GM10248 (cell line): ENCODE measurements at regions of chr6 and their contacts with region 1.

Region 1: GRCh38 chr6:32984605-32985389 is 16.4 kb downstream of the BRD2 start:
- DNase-seq: peak; percentile 75
- CTCF ChIP-seq: peak; percentile 80

Region 2: DNA sequence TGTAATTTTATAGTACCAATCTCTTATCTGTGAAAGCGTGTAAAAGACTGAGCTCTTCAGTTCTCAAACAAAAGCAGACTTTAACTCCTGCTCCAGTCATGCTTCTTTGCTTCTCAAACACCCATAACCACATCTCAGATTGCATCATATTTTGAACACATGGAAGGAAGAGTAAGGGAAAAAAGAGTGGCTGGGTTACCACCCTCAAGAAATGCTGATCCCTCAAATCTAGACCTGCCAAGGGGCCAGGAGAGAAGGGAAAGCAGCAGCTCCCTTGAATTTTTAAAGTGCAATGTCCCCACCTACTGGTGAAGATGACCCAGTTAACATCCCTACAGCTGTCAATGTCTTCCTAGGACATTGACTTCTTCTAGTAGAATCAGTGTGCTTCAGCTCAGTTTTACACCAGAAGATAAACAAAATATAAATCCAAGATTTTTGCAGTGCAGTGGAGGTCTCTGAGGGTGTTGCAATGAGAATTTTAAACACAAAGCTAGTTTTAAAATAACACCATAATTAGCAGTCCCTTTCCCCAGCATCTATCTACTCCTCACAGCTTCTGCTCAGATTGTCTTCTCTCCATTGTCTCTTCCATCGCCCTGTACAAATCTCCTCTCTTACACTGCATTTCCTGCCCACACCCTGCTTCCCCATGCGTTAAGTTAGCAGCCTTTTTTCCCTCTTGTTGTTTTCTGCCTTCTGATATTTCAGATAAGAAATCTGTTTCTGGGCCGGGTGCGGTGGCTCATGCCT is 198.8 kb before region 1 on chr6:
- CTCF ChIA-PET with region 1: no interaction called
- POLR2A ChIA-PET with region 1: no interaction called
- DNase-seq: peak; percentile 53
- CTCF ChIP-seq: peak; percentile 66

Region 3: GRCh38 chr6:32825966-32826365 is 158.8 kb before region 1 on chr6:
- CTCF ChIA-PET with region 1: interaction called, 15 read pairs
- POLR2A ChIA-PET with region 1: no interaction called
- DNase-seq: no peak
- CTCF ChIP-seq: peak; percentile 36

Region 4: DNA sequence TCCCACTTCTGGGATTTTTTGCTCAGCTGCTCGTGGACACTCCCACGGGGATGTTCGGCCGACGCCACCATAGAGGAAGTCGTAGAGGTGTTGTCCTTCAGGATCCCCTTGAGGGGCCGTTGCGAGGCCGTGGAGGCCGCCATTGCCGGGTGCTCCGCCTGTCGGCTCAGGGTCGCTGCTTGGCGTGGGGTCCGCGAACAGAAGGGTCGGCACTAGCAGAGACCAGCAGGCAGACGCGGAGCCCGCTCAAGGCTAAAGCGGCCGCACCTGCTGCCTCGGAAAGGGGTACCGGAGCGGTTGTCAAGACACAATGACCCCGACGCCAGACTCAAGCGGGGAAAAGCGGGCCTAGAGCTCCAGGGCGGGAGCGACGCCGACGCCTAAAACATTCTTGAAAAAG is 105.1 kb before region 1 on chr6:
- CTCF ChIA-PET with region 1: interaction called, 111 read pairs
- POLR2A ChIA-PET with region 1: no interaction called
- DNase-seq: no peak
- CTCF ChIP-seq: no peak

Region 5: DNA sequence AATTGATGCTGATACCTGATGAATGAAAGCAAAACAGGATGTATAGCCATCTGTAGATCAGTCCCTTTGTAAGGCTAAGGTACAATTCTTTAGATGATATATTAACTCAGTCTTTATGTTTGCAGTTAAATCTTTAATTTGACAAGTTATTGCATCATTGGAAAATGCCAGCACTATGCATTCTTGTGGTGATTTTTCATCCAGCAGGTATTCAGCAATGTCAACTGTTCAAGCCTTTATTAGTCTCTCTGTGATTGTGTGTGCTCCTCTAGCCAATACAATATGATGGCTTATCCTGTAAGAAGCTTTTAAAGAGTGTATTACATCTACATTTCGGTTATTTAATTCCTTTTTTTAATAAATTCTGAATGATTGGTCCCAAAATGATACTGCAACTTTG is 78.3 kb before region 1 on chr6:
- CTCF ChIA-PET with region 1: interaction called, 28 read pairs
- POLR2A ChIA-PET with region 1: no interaction called
- DNase-seq: no peak
- CTCF ChIP-seq: no peak

Region 6: DNA sequence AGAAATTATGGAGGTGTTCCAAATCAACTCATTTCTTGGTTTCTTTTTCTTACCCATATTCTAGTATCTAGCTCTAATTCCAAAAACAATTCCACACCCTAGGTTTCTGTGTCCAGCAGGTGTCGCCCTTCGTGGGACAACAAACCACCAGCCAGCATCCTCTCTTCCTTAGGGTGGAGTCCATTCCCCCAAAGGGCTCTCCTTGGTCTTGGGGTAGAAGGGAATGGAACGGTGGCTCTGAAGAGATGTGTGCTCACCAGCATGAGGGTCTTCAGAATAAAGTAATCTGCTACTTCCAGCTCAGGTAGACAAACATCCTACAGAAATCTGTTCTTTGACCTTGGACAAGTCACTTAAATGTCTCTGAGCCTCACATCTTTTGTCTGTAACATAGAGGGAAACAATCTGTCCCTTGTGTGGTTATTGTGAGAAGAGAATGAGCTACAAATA is 51.1 kb before region 1 on chr6:
- CTCF ChIA-PET with region 1: interaction called, 167 read pairs
- POLR2A ChIA-PET with region 1: interaction called, 23 read pairs
- DNase-seq: peak; percentile 54
- CTCF ChIP-seq: peak; percentile 81

Region 7: GRCh38 chr6:32952817-32953739 is 31.7 kb before region 1 on chr6 and contains the start of gene HLA-DMA:
- CTCF ChIA-PET with region 1: interaction called, 51 read pairs
- POLR2A ChIA-PET with region 1: interaction called, 13 read pairs
- DNase-seq: peak; percentile 86
- CTCF ChIP-seq: peak; percentile 56

Region 8: DNA sequence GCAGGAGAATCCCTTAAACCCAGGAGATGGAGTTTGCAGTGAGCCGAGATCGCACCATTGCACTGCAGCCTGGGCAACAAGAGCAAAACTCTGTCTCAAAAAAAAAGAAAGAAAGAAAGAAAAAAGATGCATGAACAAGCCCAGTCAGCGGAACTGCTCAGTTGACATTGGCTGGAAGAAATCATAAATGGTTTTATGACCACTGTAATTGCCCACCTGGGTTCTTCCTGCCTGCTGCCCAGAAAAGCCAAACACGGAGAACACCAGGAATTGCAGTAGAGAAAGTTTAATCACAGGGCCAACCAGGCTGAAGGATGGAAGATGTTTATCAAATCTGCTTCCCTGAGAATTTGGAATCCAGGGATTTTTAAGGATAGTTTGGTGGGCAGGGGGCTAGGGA is 572.6 kb after region 1 on chr6:
- CTCF ChIA-PET with region 1: no interaction called
- POLR2A ChIA-PET with region 1: no interaction called
- DNase-seq: no peak
- CTCF ChIP-seq: no peak

Region 9: DNA sequence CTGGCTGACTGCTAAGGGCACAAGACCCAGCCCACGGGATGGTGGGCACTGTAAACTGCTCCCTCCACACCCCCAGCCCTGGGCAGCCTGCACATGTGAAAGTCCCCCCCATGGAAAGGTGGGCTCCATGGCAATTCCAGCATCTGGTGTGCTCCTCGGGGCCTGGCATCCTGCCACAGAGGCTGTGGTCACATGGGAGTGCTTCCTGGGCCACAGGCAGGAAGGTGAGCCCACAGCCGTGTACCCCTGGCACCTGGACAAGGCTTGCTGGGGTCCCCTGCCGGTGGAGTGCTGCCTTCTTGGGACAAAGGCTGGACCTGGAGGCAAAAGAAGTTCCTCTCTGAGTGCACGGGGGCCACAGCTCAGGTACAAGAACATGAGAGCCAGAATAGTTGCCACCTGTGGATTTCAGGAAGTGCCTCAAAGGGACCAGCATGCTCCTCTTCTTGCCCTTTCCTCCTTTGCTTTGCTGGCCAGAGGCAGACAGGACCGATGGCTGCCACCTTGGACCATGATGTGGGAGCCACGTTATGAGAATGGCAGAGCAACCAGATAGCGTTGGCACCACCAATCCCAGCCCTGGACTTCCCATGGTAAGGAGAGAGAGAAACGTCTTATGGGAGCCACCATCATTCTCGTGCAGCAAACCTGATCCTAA is 939.2 kb after region 1 on chr6:
- CTCF ChIA-PET with region 1: no interaction called
- POLR2A ChIA-PET with region 1: no interaction called
- DNase-seq: no peak
- CTCF ChIP-seq: no peak